Posterior vena cava (tissue), 2 donors: ENCODE measurements at regions of chr4 and their contacts with region 1.

Region 1: DNA sequence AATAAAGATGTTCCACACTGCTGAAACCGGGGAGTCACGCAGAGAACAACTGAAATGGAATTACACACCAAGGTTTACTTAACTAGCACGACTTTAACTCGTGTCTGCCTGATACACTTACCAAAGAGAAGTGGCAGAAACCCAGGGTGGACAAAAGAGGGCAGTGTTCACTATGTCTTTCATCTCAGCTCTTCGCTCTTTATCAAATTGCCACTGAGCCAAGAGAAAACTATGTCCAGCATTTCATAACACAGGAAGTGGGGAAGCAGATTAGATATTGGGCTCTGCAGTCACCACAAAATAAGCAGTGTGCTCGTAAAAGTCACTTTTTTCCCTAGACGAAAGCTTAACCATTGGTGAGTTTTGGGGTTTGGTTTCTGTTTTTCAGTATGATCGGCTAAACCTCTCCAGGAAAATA is 155.7 kb downstream of the CHIC2 start:
- DNase-seq: no peak

Region 2: GRCh38 chr4:53614591-53614990 is 294.1 kb before region 1 on chr4:
- intact Hi-C with region 1: no loop called
- DNase-seq: no peak

Region 3: DNA sequence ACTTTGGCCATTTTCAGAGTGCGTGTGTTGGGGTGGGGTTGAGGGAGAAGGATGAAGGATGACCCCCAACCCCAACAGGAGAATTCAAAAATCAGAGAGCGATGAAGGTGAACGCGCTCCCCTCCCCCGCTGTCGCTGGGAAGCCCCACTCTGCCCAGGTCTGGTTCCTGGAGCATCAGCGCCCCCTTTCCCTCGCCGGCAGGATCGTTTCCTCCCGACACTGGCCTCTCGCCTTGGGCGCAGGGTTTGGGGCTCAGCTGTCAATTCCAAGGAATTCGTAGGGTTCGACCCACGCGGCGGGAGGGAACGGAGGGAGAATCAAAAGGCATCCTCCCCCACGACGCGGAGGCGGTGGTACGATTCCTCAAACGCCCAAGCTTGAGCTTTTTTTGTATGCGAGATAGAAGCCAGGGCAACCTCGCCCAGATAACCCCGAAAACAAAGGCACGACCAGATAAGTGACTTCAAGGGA is 319.4 kb after region 1 on chr4:
- intact Hi-C with region 1: loop called in 1 of 2 experiments (anchors 5 kb)
- DNase-seq: peak; percentile 93